AG04449 (cell line): ENCODE measurements at regions of chr3 and their contacts with region 1.

Region 1: GRCh38 chr3:123489400-123490004 is 40.6 kb upstream of the ADCY5 start:
- DNase-seq: no peak
- H3K4me3 ChIP-seq: no peak overlapping the region
- CTCF ChIP-seq: peak; percentile 92

Region 2: DNA sequence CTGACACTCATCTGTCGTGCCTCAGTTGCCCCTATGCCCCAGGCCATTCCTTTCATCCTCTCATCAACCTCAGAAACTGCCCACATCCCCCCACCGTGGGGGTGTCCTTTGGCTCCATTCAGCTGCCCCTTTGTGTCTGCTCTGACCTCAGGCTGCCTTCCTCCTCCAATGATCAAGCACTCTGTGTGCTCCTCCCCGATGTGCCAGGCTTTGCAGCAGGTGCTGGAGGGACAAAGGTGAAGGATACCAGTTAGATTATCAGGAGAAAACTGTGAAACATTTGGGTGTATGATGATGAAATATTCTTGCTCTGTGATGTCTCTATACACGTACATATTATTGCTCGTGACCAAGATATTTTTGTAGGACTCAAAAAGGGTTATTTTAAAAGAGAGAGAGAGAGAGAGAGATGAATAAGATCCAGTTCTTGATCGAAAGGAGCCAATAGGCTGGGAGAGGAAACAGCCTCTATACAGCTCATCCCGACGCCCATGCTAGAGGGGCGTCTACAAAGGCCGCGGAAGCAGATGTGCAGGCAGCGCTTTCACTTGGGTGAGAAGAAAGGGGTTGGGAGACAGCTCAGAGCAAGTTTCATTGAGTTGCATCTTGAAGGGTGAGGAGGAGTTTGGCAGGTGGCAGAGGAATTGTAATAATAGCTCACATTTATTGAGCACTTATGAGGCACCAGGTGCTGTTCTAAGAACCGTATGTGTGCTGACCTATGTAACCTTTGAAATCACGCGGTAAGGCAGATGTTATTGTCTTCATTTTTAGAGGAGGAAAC is 12.3 kb before region 1 on chr3:
- CTCF ChIA-PET with region 1: interaction called, 15 read pairs
- POLR2A ChIA-PET with region 1: no interaction called
- DNase-seq: no peak
- H3K4me3 ChIP-seq: no peak overlapping the region
- CTCF ChIP-seq: no peak

Region 3: DNA sequence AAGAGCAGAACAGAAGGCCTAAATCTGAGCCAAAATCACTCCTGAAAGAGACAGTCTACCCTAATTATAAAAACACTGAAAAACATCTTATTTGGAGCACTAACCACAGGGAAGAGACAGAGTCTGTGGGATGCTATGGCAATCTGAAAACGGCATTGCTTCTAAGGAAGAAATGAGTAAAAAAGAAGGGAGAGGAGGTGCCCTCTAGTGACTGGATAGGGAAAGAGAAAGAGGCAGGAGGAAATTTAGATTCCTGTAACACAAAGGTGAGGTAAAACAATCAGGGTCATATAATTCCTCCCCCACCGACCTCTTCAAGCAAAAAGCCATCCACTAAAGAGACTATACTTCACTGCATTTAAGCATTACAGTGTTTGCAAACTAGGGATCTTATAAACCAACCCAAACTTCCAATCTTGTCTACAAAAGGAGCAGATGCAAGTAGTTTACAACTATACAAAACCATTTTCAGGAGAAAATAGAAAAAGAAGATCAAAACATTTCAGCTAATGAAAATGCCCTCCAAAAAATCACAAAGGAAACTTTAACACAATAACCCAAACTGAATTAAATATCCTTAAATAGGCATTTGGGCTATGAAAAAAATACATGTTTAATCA is 62.7 kb after region 1 on chr3:
- CTCF ChIA-PET with region 1: interaction called, 15 read pairs
- POLR2A ChIA-PET with region 1: no interaction called
- DNase-seq: no peak
- H3K4me3 ChIP-seq: no peak overlapping the region
- CTCF ChIP-seq: peak; percentile 53

Region 4: DNA sequence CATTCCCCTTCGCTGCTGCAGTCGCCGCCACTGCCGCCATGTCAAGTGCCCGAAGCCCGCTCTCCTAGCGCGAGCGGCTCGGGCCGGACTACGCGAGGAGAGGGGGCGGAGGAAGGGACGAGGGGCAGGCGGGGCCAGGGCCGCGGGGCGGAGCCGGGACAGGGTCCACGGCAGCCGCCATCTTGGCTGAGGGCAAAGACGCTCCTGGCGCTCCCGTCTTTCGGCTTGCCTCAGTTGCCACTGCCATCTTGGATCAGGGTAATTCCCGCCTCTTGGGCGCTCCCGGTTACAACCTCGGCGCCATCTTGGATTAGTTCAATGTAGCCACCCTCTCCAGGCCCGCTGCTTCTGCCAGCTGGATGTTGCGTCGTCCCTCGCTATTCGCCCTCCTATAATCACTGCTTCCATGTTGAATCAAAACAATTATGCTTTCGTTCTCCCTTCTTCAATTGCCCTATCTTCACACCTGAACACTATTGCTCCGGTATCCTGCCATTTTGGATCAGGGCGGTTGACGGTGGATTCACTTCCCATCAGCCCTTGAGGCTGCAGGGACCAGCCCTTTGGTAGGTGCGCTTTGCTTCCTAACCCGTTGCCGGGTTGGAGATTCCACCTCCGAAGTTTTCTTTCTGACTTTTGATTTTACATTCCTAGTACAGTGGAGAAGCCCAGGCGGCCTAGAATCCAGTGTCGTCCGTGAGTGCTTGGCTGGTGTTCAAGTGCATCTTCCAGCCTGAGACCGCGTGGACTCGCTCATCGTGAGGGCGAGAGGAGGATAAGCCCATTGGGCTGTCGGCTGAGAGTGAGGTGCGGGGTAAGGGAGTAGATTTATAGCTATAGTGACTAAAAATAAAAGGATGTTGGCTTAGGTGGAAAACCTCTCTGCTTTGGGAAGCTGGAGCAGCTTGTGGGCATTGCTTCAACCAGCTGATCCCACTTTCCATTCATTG is 95.8 kb after region 1 on chr3 and contains the start of gene HACD2:
- CTCF ChIA-PET with region 1: no interaction called
- POLR2A ChIA-PET with region 1: no interaction called
- DNase-seq: peak; percentile 85
- H3K4me3 ChIP-seq: peak within 1 kb of the TSS; percentile 76
- CTCF ChIP-seq: no peak